Stomach (tissue), 19 donors: ENCODE measurements at regions of chr2 and their contacts with region 1.

Region 1: DNA sequence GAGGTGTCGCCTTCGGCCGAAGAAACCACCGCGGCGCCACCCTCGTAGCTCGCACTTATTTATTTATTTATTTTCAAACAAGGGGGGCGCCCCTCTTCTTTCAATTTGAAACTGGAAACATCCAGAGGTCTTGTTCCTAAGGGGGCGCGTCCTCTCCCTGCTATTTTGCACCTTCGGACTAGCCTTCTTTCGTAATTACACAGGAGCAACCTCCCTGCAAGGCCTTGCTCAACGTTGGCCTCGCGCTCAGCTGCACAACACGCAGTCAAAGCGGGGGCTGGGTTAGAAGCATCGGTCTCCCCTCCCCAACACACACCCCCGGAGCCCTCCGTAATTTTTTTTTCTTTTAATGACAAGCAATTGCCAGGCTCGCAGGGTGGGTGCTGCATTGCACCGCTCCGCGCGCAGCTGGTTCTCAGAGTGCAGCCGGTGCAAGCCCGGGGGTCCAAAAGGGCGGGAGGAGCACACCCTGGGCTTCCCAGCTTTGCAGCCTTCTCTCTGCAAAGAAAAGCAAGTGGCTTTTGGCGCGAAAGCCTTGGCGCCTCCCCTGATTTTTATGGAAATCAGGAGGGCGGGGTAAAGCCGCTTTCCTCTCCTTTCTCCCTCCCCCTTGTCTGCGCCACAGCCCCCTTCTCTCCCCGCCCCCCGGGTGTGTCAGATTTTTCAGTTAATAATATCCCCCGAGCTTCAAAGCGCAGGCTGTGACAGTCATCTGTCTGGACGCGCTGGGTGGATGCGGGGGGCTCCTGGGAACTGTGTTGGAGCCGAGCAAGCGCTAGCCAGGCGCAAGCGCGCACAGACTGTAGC is at the start of gene MYCN:
- DNase-seq: peak; percentile 69 to 94
- H3K4me3 ChIP-seq: peak within 1 kb of the TSS; percentile 53 to 70 (median 58)
- H3K27ac ChIP-seq: peak within 1 kb of the TSS; percentile 32 to 76 (median 57)
- H3K4me1 ChIP-seq: peaks cover 32 to 55% (median 50%) of the 10 kb centered on the region in 4 donors
- H3K27me3 ChIP-seq: peaks cover 0 to 58% (median 28%) of the 10 kb centered on the region in 3 donors
- CTCF ChIP-seq: peak in 2 of 7 experiments; percentile 61 to 79
- EP300 ChIP-seq: no peak
- POLR2A ChIP-seq: no peak
- total RNA-seq, gene MYCN: 2.3 to 9.6 (median 5.6) TPM in 4 of 5 donors, not detected in the other

Region 2: GRCh38 chr2:15560988-15561573 is 379.0 kb before region 1 on chr2 and contains the start of gene NBAS:
- intact Hi-C with region 1: no loop called
- DNase-seq: peak; percentile 86 to 96
- H3K4me3 ChIP-seq: peak within 1 kb of the TSS; percentile 82 to 93 (median 86)
- H3K27ac ChIP-seq: peak within 1 kb of the TSS; percentile 79 to 87 (median 83)
- H3K4me1 ChIP-seq: peaks cover 14 to 39% (median 31%) of the 10 kb centered on the region in 4 donors
- H3K27me3 ChIP-seq: no peaks in the 10 kb centered on the region
- CTCF ChIP-seq: peak in 1 of 7 experiments; percentile 5
- EP300 ChIP-seq: no peak
- POLR2A ChIP-seq: no peak
- total RNA-seq, gene NBAS: 36.8 to 96.2 (median 79.5) TPM

Region 3: GRCh38 chr2:16281451-16282336 is 341.6 kb after region 1 on chr2:
- intact Hi-C with region 1: loop called (anchors 10 kb)
- DNase-seq: peak; percentile 38 to 76
- H3K4me3 ChIP-seq: no peak overlapping the region
- H3K27ac ChIP-seq: no peak overlapping the region
- H3K4me1 ChIP-seq: peaks cover 0 to 5% (median 0%) of the 10 kb centered on the region in 4 donors
- H3K27me3 ChIP-seq: no peaks in the 10 kb centered on the region
- CTCF ChIP-seq: peak in 5 of 7 experiments; percentile 28 to 52 (median 45)
- EP300 ChIP-seq: no peak
- POLR2A ChIP-seq: no peak

Region 4: DNA sequence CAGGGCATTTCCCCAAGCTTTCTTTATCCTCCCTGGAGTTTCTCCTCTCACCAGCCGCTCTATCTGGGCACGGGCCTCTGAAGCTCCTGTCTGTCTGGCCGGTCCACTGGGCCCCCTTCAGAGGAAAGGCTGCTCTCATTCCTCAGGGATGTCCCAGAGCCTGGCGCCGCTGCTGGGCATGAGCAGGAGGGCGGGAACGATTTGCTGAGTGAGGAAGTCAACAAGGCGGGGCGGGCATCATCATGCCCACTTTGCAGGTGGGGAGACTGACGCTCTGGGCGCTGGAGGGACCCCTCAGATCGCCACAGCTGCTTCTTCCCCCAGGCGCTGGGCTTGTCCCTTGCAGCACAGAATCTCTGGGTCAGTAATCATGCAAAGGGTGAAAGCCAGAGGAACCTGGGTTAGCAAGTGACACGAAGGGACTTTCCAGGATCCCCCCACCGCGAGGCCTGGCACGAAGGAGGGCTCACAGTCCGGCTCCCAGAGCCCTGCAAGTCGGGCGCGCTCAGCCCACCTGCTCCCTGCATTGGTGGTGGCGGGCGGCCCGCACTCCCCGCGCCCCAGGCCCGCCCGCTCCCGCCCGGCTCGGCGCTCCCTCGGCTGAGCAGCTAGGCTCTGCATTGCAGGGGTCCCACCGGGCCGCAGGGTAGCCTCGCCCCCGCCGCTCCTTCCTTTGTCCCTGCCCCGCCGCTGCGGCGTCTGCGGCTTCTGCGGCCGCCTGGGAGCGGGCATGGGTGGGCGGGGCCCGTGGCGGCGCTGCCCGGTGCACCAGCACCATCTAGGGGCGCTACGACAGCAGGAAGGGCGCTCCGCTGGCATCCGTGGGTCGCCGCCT is 567.8 kb after region 1 on chr2:
- intact Hi-C with region 1: loop called (anchors 10 kb)
- DNase-seq: peak; percentile 62 to 88
- H3K4me3 ChIP-seq: peak overlapping the region; percentile 34 to 54 (median 48)
- H3K27ac ChIP-seq: no peak overlapping the region
- H3K4me1 ChIP-seq: peaks cover 11 to 13% (median 12%) of the 10 kb centered on the region in 4 donors
- H3K27me3 ChIP-seq: peaks cover 0 to 37% (median 33%) of the 10 kb centered on the region in 3 donors
- CTCF ChIP-seq: peak in 5 of 7 experiments; percentile 31 to 71 (median 53)
- EP300 ChIP-seq: no peak
- POLR2A ChIP-seq: no peak

Region 5: DNA sequence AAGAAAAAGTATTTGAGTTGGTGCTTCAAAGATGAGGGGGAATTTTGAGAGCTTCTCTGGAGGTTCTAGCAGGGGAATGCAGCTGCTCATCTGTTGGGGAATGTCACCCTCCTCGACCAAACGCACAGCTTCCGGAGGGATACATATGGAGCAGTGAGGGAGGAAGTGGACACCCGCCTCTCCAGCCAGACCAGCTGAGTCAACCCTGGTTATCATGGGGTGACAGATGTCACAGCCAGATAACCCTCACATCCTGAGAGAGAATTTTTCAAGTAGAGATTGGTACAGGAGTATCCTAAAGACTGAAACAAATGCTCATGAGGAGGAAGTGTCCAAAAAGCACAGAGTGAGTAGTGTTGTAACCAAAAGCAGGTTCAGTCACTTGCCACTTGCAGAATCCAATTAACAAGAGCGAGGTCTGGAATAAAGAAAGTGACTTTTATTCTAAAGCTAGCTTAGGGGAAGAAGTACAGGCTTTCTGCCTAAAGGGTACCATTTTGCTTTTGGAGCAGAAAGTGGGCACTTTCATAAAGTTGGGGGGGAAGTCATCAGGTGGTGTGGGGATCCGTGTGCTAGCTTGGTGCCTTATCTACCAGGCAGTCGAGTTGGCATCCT is 1182.9 kb after region 1 on chr2:
- intact Hi-C with region 1: no loop called
- DNase-seq: peak in 1 of 2 donors; percentile 6
- H3K4me3 ChIP-seq: no peak overlapping the region
- H3K27ac ChIP-seq: no peak overlapping the region
- H3K4me1 ChIP-seq: no peaks in the 10 kb centered on the region
- H3K27me3 ChIP-seq: no peaks in the 10 kb centered on the region
- CTCF ChIP-seq: no peak
- EP300 ChIP-seq: no peak
- POLR2A ChIP-seq: no peak